GM18951 (cell line): ENCODE measurements at regions of chr1 and their contacts with region 1.

Region 1: GRCh38 chr1:169348383-169349036 is 19.1 kb downstream of the NME7 start:
- POLR2A ChIP-seq: no peak

Region 2: GRCh38 chr1:169115891-169116585 is 232.5 kb before region 1 on chr1:
- in situ Hi-C with region 1: loop called (anchors 10 kb)
- POLR2A ChIP-seq: no peak

Region 3: DNA sequence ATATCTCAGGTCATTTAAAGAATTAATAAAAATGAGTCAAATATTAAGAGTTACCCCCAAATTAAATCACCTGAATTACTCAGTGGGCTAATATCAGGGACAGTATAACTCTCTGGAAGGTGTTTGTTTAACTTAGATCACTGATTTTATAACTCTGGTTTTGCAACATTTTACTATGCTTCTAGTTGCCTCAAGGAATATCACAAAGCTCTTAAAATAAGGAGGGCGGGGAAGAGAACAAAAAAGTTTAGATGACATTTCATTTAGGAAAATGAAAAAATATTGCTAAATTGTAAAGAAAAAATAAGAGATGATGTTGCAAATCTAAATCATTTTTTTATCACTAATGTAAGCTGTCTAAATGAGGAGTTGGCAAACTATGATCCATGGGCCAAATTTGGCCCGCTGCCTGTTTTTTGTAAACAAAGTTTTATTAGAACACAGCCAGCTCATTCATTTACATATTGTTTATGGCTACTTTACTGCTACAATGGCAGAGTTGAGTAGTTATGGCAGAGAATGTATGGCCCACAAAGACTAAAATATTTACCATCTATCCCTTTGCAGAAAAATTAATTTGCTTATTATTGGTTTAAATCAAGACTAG is 169.2 kb after region 1 on chr1:
- in situ Hi-C with region 1: no loop called
- POLR2A ChIP-seq: no peak

Region 4: GRCh38 chr1:169648709-169649108 is 300.2 kb after region 1 on chr1:
- in situ Hi-C with region 1: no loop called
- POLR2A ChIP-seq: no peak